Activated naive CD4-positive, alpha-beta T cell treated with anti-CD3 and anti-CD28 coated beads for 36 hours (primary cell): ENCODE measurements at regions of chr4 and their contacts with region 1.

Region 1: GRCh38 chr4:150209140-150209829 is 131.0 kb downstream of the DCLK2 start:
- DNase-seq: peak; percentile 49
- H3K4me3 Mint-ChIP-seq: no peak overlapping the region
- H3K27ac Mint-ChIP-seq: no peak overlapping the region
- H3K4me1 Mint-ChIP-seq: no peaks in the 10 kb centered on the region
- H3K27me3 Mint-ChIP-seq: peaks cover 3% of the 10 kb centered on the region

Region 2: DNA sequence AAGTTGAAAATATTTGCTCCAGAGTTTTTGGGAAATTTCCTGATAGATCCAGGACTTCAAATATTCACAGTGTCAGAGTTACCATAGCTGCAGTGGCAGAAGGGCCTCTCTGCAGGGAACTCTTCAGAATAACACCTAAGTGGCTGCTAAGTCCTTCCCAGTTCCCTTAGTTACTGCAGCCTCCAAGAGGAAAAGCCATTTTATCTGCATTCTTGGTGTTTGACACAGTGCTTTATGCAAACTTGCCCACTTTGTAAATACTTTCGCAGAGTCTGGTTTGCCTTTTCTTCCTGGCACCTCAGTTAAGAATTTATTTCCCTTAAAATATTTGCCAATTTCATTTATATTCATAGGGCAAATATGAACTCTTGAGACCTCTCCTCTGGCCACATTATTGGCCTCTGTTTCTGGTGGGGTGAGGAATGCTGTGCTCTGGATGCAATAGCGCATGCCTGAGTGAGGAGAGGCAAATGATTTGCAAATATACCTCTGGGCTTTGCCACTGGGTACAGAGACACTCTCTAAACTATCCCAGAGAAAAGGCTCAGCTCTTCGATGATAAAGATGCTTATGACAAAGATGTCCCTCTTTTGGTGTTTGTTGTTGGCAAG is 1200.8 kb before region 1 on chr4:
- CTCF ChIA-PET with region 1: no interaction called
- intact Hi-C with region 1: no loop called
- DNase-seq: no peak
- H3K4me3 Mint-ChIP-seq: no peak overlapping the region
- H3K27ac Mint-ChIP-seq: no peak overlapping the region
- H3K4me1 Mint-ChIP-seq: no peaks in the 10 kb centered on the region
- H3K27me3 Mint-ChIP-seq: no peaks in the 10 kb centered on the region

Region 3: DNA sequence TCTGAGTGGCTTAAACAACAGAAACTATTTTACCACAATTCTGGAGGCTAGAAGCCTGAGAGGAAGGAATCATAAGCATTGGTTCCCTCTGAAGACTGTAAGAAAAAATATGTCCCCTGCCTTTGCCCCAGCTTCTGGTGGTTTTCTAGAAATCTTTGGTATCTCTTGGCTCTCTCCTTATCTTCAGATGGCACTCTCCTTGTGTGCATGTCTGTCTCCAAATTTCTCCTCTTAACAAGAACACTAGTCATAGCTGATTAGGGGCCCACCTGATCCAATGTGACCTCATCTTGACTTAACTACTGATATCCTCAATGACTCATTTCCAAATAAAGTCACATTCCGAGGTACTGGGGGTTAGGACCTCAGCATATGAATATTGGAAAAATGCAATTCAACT is 1132.1 kb before region 1 on chr4:
- CTCF ChIA-PET with region 1: no interaction called
- intact Hi-C with region 1: no loop called
- DNase-seq: no peak
- H3K4me3 Mint-ChIP-seq: no peak overlapping the region
- H3K27ac Mint-ChIP-seq: no peak overlapping the region
- H3K4me1 Mint-ChIP-seq: no peaks in the 10 kb centered on the region
- H3K27me3 Mint-ChIP-seq: peaks cover 4% of the 10 kb centered on the region

Region 4: GRCh38 chr4:149980941-149981340 is 228.3 kb before region 1 on chr4:
- CTCF ChIA-PET with region 1: no interaction called
- intact Hi-C with region 1: loop called (anchors 1 kb)
- DNase-seq: peak; percentile 69
- H3K4me3 Mint-ChIP-seq: no peak overlapping the region
- H3K27ac Mint-ChIP-seq: no peak overlapping the region
- H3K4me1 Mint-ChIP-seq: no peaks in the 10 kb centered on the region
- H3K27me3 Mint-ChIP-seq: no peaks in the 10 kb centered on the region

Region 5: GRCh38 chr4:149999485-150000074 is 209.7 kb before region 1 on chr4:
- CTCF ChIA-PET with region 1: no interaction called
- intact Hi-C with region 1: loop called (anchors 5 kb)
- DNase-seq: peak; percentile 11
- H3K4me3 Mint-ChIP-seq: no peak overlapping the region
- H3K27ac Mint-ChIP-seq: no peak overlapping the region
- H3K4me1 Mint-ChIP-seq: no peaks in the 10 kb centered on the region
- H3K27me3 Mint-ChIP-seq: peaks cover 17% of the 10 kb centered on the region

Region 6: GRCh38 chr4:150010525-150011126 is 198.7 kb before region 1 on chr4:
- CTCF ChIA-PET with region 1: interaction called, 5 read pairs
- intact Hi-C with region 1: loop called (anchors 5 kb)
- DNase-seq: peak; percentile 15
- H3K4me3 Mint-ChIP-seq: no peak overlapping the region
- H3K27ac Mint-ChIP-seq: no peak overlapping the region
- H3K4me1 Mint-ChIP-seq: no peaks in the 10 kb centered on the region
- H3K27me3 Mint-ChIP-seq: peaks cover 10% of the 10 kb centered on the region